ENCODE measurements at regions of chr11 and their contacts with region 1.

Region 1: DNA sequence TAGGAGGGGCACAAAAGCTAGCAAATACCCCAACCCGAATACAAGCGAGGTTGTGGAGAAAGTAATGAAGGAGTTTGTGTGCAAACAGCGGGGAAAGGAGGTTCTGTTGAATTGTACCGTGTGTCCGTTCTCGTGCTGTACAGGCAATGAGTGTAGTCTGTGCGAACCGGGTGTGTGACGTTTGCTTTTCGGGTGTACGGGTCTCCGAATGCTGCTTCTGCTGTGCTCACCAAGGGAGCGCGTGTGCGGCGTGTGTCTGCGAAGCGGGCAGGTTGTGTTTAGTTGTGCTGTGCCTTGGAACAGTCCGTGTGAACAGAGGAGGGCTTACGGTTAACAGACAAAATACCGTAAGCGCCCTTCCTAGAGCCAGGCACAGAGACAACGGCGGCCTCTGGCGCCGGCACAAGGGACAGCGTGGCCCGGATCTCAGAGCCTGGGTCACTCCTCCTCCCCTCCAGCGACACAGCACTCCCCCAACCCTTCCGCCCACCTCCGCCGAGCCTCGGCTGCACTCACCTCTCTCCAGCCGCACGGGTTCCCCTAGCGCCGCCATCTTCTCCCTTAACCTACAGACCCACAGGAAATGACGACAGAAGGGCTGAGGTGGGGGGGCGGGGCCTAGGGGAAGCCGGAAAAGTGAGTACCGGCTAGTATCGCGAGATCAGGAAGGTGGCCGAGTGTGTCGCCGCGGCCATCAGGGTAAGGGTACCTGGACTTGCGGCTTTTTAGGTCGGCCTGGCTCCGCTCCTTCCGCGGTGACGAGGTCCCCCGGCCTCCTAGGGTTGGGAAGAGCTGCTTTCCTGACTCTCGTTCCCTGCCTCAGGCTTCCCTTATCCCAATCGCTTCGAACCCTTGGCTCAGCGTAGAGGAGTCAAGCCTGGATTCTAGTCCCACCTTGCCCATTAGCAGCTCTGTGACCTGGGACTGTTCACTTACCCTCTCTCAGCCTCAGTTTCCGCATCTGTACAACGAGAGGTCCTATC is at the start of gene LIN7C:
- DNase-seq: peak; percentile 96 to 97
- ATAC-seq: peak; percentile 99
- H3K4me3 ChIP-seq: peak within 1 kb of the TSS; percentile 89
- H3K27ac ChIP-seq: peak within 1 kb of the TSS; percentile 94
- H3K4me1 ChIP-seq: peaks cover 46% of the 10 kb centered on the region
- H3K27me3 ChIP-seq: no peaks in the 10 kb centered on the region
- CTCF ChIP-seq: no peak
- total RNA-seq, gene LIN7C: 13.1 to 18.9 (median 14.7) TPM

Region 2: DNA sequence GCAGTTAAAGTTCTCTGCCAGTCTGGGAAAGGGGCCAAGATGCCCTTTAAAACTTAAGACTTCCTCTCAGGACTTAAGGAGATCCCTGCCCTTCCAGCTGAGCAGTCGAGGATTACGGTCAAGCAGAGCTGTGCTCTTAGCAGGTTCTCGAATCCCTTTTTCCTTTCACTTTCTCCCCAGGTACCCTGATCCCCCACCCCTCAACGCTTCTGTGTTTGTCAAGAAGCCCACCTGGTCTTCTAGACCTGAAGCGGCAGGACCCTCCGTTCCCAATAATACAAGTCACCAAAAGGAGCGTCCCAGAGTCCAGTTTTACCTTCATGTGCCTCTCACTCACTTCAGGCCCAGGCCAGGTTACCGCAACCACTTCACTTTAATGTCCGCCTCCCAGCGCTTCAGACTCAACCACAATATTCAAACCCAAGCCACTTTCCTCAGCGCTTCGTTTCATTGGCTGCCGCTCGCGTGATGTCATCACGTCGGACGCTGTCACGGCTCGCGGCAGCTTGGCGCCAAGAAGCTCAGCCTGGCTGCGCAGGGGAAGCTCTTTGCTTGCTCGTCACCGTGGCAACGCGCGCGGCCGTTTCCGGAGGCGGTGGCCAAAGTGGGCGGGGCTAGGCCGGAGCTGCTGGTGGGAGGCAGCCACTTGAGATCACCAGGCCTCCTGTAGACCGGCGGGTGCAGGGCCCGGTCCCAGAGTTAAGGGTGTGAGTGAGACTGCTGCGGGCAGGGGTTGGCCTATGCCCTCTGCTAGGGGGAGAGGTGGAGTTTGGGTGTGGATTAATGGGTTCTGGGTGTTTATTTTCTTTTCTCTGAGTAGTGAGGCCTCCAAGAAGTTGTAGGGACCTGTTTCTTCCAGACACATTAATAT is 601.5 kb after region 1 on chr11 and contains the starts of genes KIF18A and METTL15:
- intact Hi-C with region 1: loop called in 1 of 2 experiments (anchors 5 kb)
- DNase-seq: peak; percentile 100
- ATAC-seq: peak; percentile 99 to 100 (median 99)
- H3K4me3 ChIP-seq: peak within 1 kb of the TSS; percentile 81
- H3K27ac ChIP-seq: peak within 1 kb of the TSS; percentile 84
- H3K4me1 ChIP-seq: peaks cover 27% of the 10 kb centered on the region
- H3K27me3 ChIP-seq: no peaks in the 10 kb centered on the region
- CTCF ChIP-seq: no peak
- total RNA-seq, gene KIF18A: 0.15 to 0.46 TPM in 2 of 4 donors, not detected in the others
- total RNA-seq, gene METTL15: 7.4 to 9.5 (median 8.5) TPM

Measured in psoas muscle (tissue), 8 donors.